Gastrocnemius medialis (tissue), 4 donors: ENCODE measurements at regions of chr6 and their contacts with region 1.

Region 1: GRCh38 chr6:151323791-151324487 is 67.4 kb downstream of the ZBTB2 start:
- DNase-seq: peak; percentile 59 to 78
- ATAC-seq: peak; percentile 88 to 90
- H3K4me3 ChIP-seq: no peak overlapping the region
- H3K27ac ChIP-seq: peak overlapping the region; percentile 40 to 73 (median 72)
- H3K4me1 ChIP-seq: peaks cover 12 to 22% of the 10 kb centered on the region in 2 donors
- H3K27me3 ChIP-seq: peaks cover 7 to 21% (median 14%) of the 10 kb centered on the region in 3 donors
- CTCF ChIP-seq: peak; percentile 80 to 97 (median 94)
- POLR2A ChIP-seq: no peak

Region 2: DNA sequence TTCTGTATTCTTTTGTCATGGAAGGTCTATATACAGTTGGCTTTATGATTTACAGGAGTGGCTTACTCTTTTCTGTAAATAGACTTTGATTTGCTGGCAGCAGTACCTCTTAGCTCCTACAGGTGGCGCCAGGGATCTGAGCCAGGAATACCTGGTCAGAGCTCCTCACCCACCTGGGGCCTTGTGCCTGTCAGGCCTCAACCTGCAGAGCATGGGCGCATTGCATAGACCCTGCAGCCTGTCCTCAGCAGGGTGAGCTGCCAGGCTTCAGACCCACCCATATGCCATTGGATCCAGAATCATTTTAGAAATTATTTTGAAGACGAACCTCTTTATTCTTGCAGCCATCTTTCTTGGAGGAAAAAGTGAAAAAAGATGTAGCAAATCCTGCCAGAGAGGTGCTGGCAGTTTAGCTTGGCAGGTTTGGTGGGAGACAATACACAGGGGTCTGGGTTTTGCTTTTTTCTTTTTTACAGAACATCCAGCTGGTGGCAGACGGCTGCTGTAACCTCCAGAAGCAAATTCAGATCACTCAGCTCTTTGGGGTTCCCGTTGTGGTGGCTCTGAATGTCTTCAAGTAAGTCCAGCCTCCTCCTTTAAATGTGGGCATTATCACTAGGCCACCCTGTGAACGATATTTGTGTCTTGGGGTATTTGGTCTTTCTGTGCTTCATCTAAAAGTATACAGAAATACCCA is 309.4 kb before region 1 on chr6:
- in situ Hi-C with region 1: loop called in 2 of 4 experiments (anchors 5 to 10 kb)
- intact Hi-C with region 1: loop called (anchors 1 kb)
- DNase-seq: peak; percentile 31 to 42
- ATAC-seq: no peak
- H3K4me3 ChIP-seq: no peak overlapping the region
- H3K27ac ChIP-seq: no peak overlapping the region
- H3K4me1 ChIP-seq: no peaks in the 10 kb centered on the region
- H3K27me3 ChIP-seq: no peaks in the 10 kb centered on the region
- CTCF ChIP-seq: peak; percentile 82 to 92 (median 86)
- POLR2A ChIP-seq: no peak

Region 3: DNA sequence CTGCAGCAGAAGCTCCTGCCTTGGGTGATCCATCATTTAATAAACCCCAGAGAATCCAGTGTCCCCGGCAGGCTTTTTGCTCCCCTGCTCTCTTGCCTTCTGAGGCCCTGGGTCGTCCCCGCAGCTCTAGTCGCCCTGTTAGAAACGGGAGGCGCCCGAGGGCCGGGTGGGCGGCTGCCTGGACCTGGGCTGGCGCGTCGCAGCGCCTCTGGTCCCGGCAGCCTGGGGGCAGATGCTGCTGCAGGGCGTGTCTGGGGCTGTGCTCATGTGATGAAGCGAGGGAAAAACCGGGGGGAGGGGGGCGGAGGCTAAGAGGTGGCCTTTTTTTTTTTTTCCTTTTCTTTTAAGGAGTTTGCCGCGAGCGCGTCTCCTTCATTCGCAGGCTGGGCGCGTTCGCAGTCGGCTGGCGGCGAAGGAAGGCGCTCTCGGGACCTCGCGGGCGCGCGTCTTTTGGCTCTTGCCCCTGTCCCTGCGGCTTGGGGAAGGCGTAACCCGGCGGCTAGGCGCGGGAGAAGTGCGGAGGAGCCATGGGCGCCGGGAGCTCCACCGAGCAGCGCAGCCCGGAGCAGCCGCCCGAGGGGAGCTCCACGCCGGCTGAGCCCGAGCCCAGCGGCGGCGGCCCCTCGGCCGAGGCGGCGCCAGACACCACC is 83.8 kb before region 1 on chr6:
- in situ Hi-C with region 1: no loop called
- intact Hi-C with region 1: loop called (anchors 1 kb)
- DNase-seq: peak; percentile 35 to 67
- ATAC-seq: peak; percentile 67 to 74
- H3K4me3 ChIP-seq: peak overlapping the region; percentile 60 to 71 (median 66)
- H3K27ac ChIP-seq: peak overlapping the region; percentile 72 to 82 (median 78)
- H3K4me1 ChIP-seq: peaks cover 5 to 8% of the 10 kb centered on the region in 2 donors
- H3K27me3 ChIP-seq: peaks cover 3 to 31% (median 18%) of the 10 kb centered on the region in 3 donors
- CTCF ChIP-seq: no peak
- POLR2A ChIP-seq: peak; percentile 40 to 43

Region 4: GRCh38 chr6:151475653-151476523 is 151.9 kb after region 1 on chr6:
- in situ Hi-C with region 1: no loop called
- intact Hi-C with region 1: no loop called
- DNase-seq: no peak
- ATAC-seq: peak in 1 of 2 donors; percentile 44
- H3K4me3 ChIP-seq: peak overlapping the region in 1 of 4 donors; percentile 16
- H3K27ac ChIP-seq: no peak overlapping the region
- H3K4me1 ChIP-seq: no peaks in the 10 kb centered on the region
- H3K27me3 ChIP-seq: no peaks in the 10 kb centered on the region
- CTCF ChIP-seq: peak; percentile 27 to 81 (median 72)
- POLR2A ChIP-seq: no peak

Region 5: GRCh38 chr6:151561238-151561637 is 237.3 kb after region 1 on chr6:
- in situ Hi-C with region 1: no loop called
- intact Hi-C with region 1: no loop called
- DNase-seq: no peak
- ATAC-seq: no peak
- H3K4me3 ChIP-seq: no peak overlapping the region
- H3K27ac ChIP-seq: no peak overlapping the region
- H3K4me1 ChIP-seq: no peaks in the 10 kb centered on the region
- H3K27me3 ChIP-seq: no peaks in the 10 kb centered on the region
- CTCF ChIP-seq: no peak
- POLR2A ChIP-seq: no peak